ENCODE measurements at regions of chr1 and their contacts with region 1.

Region 1: GRCh38 chr1:94383966-94384408 is 34.2 kb upstream of the ABCD3 start:
- DNase-seq: peak; percentile 66 to 93
- ATAC-seq: peak; percentile 98
- H3K4me3 ChIP-seq: no peak overlapping the region
- H3K27ac ChIP-seq: peak overlapping the region; percentile 96 to 97
- H3K4me1 ChIP-seq: peaks cover 33% of the 10 kb centered on the region
- CTCF ChIP-seq: no peak
- EP300 ChIP-seq: peak; percentile 49 to 61; a peak in 2 of 5 replicates
- POLR2A ChIP-seq: no peak
- RAD21 ChIP-seq: 0 out of 5 replicates have a peak, but pooled peaks have one; percentile 20 to 32

Region 2: DNA sequence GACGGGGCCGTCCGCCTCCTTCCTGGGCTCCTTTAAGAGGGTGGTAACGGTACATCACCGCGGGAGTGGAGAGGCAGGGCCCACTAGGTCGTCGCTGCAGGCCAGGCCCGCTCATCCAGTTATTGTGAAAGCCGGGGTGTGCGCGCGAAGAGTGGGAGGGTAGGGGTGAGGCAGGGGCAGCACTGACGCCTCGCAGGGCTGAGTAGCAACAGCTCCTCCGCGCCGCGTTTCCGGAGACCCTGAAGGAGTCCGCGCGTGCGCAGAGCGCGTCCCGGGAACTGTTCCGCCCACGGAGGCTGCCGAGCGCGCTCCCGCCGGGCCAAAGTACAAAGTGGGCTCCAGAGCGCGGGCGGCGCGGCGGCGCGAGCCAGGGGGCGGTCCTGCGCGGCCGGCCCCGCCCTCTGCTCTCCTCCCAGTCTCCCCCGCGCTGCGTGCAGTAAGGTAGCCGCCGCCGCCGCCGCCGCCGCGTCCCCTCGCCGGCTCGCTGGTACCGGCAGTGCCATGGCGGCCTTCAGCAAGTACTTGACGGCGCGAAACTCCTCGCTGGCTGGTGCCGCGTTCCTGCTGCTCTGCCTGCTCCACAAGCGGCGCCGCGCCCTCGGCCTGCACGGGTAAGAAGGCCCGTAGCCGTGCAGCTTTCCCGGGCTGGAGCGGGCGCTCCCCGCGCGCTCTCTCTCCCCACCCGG is 34.1 kb after region 1 on chr1 and contains the start of gene ABCD3:
- CTCF ChIA-PET with region 1: no interaction called
- POLR2A ChIA-PET with region 1: interaction called, 12 read pairs
- DNase-seq: peak; percentile 68 to 96
- ATAC-seq: peak; percentile 94
- H3K4me3 ChIP-seq: peak within 1 kb of the TSS; percentile 94
- H3K27ac ChIP-seq: peak within 1 kb of the TSS; percentile 92
- H3K4me1 ChIP-seq: peaks cover 46% of the 10 kb centered on the region
- CTCF ChIP-seq: no peak
- EP300 ChIP-seq: no peak
- POLR2A ChIP-seq: peak; percentile 67
- RAD21 ChIP-seq: peak in 1 of 2 experiments; percentile 4; a peak in 1 of 5 replicates
- polyA plus RNA-seq, gene ABCD3: 34.5 and 44.8 TPM in 2 replicates

Measured in A549 (cell line).